Heart left ventricle (tissue), 16 donors: ENCODE measurements at regions of chr14 and their contacts with region 1.

Region 1: GRCh38 chr14:68780358-68781160 is 12.3 kb downstream of the ZFP36L1 start:
- DNase-seq: peak; percentile 76 to 86 (median 78)
- ATAC-seq: peak; percentile 54 to 92 (median 82)
- H3K4me3 ChIP-seq: peak overlapping the region in 1 of 12 donors; percentile 30
- H3K27ac ChIP-seq: peak overlapping the region; percentile 26 to 90 (median 56)
- H3K4me1 ChIP-seq: peaks cover 0 to 60% (median 32%) of the 10 kb centered on the region in 12 donors
- H3K27me3 ChIP-seq: no peaks in the 10 kb centered on the region
- CTCF ChIP-seq: no peak
- POLR2A ChIP-seq: no peak

Region 2: GRCh38 chr14:68297876-68298469 is 482.6 kb before region 1 on chr14:
- intact Hi-C with region 1: no loop called
- DNase-seq: no peak
- ATAC-seq: no peak
- H3K4me3 ChIP-seq: no peak overlapping the region
- H3K27ac ChIP-seq: peak overlapping the region in 3 of 12 donors; percentile 2 to 21 (median 6)
- H3K4me1 ChIP-seq: peaks cover 0 to 59% (median 19%) of the 10 kb centered on the region in 12 donors
- H3K27me3 ChIP-seq: no peaks in the 10 kb centered on the region
- CTCF ChIP-seq: peak in 5 of 12 donors; percentile 5 to 30 (median 26)
- POLR2A ChIP-seq: no peak

Region 3: GRCh38 chr14:68377459-68377858 is 403.1 kb before region 1 on chr14:
- intact Hi-C with region 1: loop called in 1 of 10 experiments (anchors 10 kb)
- DNase-seq: peak; percentile 56 to 80 (median 74)
- ATAC-seq: peak; percentile 68 to 95 (median 92)
- H3K4me3 ChIP-seq: no peak overlapping the region
- H3K27ac ChIP-seq: peak overlapping the region; percentile 33 to 88 (median 77)
- H3K4me1 ChIP-seq: peaks cover 0 to 77% (median 23%) of the 10 kb centered on the region in 12 donors
- H3K27me3 ChIP-seq: no peaks in the 10 kb centered on the region
- CTCF ChIP-seq: no peak
- POLR2A ChIP-seq: no peak

Region 4: DNA sequence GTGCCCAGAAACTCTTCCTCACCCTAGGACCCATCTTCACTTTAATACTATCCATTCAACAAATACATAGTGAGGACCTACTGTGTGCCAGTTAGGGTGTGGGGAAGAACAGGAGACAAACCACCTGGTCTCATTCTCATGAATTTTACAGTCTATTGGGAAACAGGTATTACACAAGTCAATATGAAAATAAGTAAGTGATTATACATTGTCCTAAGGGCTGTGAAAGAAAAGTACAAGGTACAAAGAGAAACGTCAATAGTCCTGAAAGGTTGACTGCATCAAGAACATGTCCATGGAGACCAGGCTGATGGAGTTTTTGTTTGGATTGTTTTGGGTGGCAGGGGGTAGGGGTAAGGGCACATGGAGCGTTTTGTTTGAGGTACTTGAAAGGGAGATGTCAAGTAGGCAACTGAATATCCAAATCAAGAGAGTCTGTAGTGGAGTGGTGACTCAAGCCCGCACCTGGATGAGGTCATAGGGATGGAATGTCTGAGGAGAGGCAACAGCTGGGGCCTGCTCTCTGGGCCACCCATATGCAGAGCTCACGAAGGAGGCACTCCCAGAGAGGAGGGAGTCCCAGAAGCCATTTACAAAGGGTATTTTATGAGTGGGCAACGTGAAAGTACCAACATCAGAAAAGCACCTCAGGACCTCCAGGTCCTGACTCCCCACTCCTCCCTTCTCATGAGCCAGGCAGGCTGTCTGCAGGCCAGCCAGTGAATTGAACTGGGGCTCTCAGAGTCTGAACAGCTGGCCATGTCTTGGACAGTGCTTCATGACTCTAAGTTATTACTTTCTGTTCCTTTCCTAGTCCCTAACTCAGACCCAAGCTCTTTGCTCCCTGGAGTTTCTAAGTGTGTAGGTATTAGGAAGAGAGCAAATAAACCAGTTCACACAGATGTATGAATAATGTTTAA is 259.7 kb before region 1 on chr14:
- intact Hi-C with region 1: loop called in 3 of 10 experiments (anchors 5 to 10 kb)
- DNase-seq: no peak
- ATAC-seq: peak in 1 of 4 donors; percentile 30
- H3K4me3 ChIP-seq: no peak overlapping the region
- H3K27ac ChIP-seq: peak overlapping the region in 7 of 12 donors; percentile 51 to 74 (median 60)
- H3K4me1 ChIP-seq: peaks cover 0 to 74% (median 49%) of the 10 kb centered on the region in 12 donors
- H3K27me3 ChIP-seq: no peaks in the 10 kb centered on the region
- CTCF ChIP-seq: no peak
- POLR2A ChIP-seq: no peak

Region 5: GRCh38 chr14:68621400-68622365 is 158.9 kb before region 1 on chr14:
- intact Hi-C with region 1: no loop called
- DNase-seq: peak in 4 of 5 donors; percentile 60 to 74 (median 64)
- ATAC-seq: peak; percentile 36 to 70 (median 50)
- H3K4me3 ChIP-seq: no peak overlapping the region
- H3K27ac ChIP-seq: peak overlapping the region in 11 of 12 donors; percentile 27 to 95 (median 82)
- H3K4me1 ChIP-seq: peaks cover 0 to 47% (median 30%) of the 10 kb centered on the region in 12 donors
- H3K27me3 ChIP-seq: no peaks in the 10 kb centered on the region
- CTCF ChIP-seq: no peak
- POLR2A ChIP-seq: no peak

Region 6: GRCh38 chr14:68727315-68728047 is 53.1 kb before region 1 on chr14:
- intact Hi-C with region 1: loop called in 6 of 10 experiments (anchors 5 kb)
- DNase-seq: peak in 4 of 5 donors; percentile 36 to 57 (median 48)
- ATAC-seq: peak; percentile 34 to 81 (median 62)
- H3K4me3 ChIP-seq: no peak overlapping the region
- H3K27ac ChIP-seq: peak overlapping the region in 9 of 12 donors; percentile 1 to 78 (median 51)
- H3K4me1 ChIP-seq: peaks cover 4 to 59% (median 39%) of the 10 kb centered on the region in 12 donors
- H3K27me3 ChIP-seq: no peaks in the 10 kb centered on the region
- CTCF ChIP-seq: no peak
- POLR2A ChIP-seq: no peak

Region 7: DNA sequence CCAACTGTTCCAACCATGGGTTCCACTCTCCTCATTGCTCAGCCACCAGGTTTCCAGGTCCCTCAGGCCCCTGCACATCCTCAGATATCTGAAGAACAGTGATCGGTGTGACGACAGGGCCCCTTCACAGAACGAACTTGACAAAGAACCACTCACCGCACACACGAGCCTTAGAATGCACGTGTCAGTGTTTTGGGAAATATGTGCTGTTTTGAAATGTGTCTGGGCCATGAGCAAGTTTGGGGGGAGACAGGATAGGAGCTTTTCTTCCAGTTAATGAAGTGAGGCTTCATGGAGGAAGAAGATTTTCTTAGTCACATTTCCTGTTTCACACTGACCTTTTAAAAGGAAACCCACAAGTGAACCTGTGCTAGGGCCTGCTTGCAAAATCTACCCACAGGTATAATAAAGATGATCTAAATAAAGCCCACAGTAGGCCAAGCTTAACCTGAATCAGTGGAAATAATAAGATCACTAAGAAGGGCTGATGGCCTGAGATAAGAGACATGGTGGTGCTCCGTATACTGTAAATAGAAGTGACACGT is 46.3 kb before region 1 on chr14:
- intact Hi-C with region 1: loop called in 8 of 10 experiments (anchors 5 kb)
- DNase-seq: no peak
- ATAC-seq: peak in 1 of 4 donors; percentile 7
- H3K4me3 ChIP-seq: no peak overlapping the region
- H3K27ac ChIP-seq: peak overlapping the region in 5 of 12 donors; percentile 30 to 79 (median 47)
- H3K4me1 ChIP-seq: peaks cover 0 to 82% (median 47%) of the 10 kb centered on the region in 12 donors
- H3K27me3 ChIP-seq: no peaks in the 10 kb centered on the region
- CTCF ChIP-seq: no peak
- POLR2A ChIP-seq: no peak

Region 8: DNA sequence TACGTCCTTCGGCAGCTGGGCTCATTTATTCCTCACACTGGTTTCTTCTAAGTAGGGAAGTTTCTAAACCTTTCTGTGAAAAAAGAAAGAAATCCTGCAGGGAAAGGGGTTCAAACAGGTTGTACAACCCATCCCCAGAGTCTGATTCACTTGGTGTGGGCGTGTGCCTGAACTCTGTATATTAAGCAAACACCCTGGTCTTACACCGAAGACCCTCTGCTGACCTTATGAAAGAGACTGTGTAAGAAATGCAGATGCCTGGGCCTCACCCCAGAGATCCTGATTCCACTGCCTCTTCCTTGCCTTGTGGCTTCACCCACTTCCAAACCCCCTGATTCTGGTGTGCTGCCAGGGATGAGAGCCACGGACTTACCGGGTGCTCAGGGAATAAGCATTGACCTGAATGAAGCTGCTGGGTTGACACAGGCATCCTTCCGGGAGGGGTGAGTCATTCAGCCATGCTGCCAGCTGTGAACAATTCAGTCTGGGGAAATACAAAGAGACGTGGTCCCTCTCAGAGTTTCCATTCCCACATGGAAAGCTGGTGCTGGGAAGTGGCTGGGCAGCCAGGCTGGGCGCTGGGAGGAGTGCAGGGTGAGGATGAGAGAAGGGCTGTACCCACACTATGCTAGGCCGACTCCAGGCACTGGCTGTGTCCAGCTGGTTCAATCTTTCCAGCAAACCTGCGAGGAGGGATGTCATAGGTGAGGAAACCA is 225.0 kb after region 1 on chr14:
- intact Hi-C with region 1: no loop called
- DNase-seq: peak in 4 of 5 donors; percentile 34 to 83 (median 62)
- ATAC-seq: peak in 3 of 4 donors; percentile 77 to 86 (median 83)
- H3K4me3 ChIP-seq: no peak overlapping the region
- H3K27ac ChIP-seq: no peak overlapping the region
- H3K4me1 ChIP-seq: peaks cover 0 to 11% (median 4%) of the 10 kb centered on the region in 12 donors
- H3K27me3 ChIP-seq: no peaks in the 10 kb centered on the region
- CTCF ChIP-seq: no peak
- POLR2A ChIP-seq: no peak